ENCODE measurements at regions of chr4 and their contacts with region 1.

Region 1: DNA sequence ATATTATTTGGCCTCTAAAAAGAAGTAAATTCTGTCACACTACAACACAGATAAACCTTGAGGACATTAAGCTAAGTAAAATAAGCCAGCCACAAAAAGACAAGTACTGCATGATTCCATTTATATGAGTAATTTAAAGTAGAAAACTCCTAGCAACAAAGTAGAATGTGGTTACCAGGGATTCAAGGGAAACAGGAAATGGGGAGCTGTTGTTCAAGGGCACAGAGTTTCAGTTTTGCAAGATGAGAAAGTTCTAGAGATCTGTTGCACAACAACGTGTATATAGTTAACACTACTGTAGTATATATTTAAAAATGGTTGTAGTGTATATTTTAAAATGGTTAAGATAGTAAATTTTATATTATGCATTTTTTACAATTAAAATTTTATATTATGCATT is 25.4 kb downstream of the SEC31A start:
- DNase-seq: peak; percentile 24
- H3K4me3 Mint-ChIP-seq: no peak overlapping the region
- H3K27ac Mint-ChIP-seq: peak overlapping the region; percentile 91
- H3K4me1 Mint-ChIP-seq: peaks cover 48% of the 10 kb centered on the region
- H3K27me3 Mint-ChIP-seq: no peaks in the 10 kb centered on the region

Region 2: GRCh38 chr4:82825425-82825824 is 40.2 kb before region 1 on chr4:
- intact Hi-C with region 1: no loop called
- DNase-seq: no peak
- H3K4me3 Mint-ChIP-seq: no peak overlapping the region
- H3K27ac Mint-ChIP-seq: no peak overlapping the region
- H3K4me1 Mint-ChIP-seq: peaks cover 7% of the 10 kb centered on the region
- H3K27me3 Mint-ChIP-seq: no peaks in the 10 kb centered on the region

Region 3: DNA sequence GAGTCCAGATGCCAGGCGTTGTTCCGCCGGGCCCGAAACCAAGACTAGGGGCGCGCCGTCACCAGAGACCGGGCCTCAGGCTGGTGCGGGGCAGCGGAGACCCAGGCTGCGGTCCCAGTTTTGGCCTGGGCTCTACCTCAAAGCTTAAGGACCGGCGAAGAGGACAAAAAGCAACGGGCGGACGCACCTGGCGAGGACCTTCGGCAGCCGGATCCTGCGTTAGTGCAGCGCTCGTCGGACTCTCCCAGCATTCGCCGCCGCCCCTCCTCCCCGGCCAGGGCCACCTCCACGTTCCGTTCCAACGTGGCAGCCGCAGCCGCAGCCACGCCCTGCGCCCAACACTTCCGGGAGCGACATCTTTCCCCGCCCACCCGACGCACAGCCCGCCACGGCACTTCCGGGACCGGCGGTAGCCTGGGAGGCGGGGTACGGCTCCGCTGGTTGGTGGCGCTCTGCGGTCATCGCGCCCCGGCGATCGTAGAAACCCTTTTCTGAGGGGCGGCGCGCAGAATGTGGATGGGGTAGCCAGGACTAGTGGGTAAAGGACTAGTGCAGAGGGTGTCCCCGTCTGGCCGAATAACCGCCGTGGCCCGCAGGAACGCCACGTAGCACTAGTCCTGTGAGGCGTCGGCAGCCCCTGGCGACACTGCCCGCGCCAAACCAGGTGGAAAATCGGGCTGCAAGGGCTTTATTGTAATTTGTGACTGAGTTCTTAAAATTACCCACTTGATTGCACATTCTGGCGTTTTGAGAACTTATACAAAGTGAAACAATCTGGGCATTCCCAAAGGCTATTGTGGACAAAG is 25.5 kb after region 1 on chr4 and contains the start of gene SEC31A:
- intact Hi-C with region 1: loop called (anchors 1 kb)
- DNase-seq: peak; percentile 96
- H3K4me3 Mint-ChIP-seq: peak within 1 kb of the TSS; percentile 88
- H3K27ac Mint-ChIP-seq: peak within 1 kb of the TSS; percentile 86
- H3K4me1 Mint-ChIP-seq: peaks cover 51% of the 10 kb centered on the region
- H3K27me3 Mint-ChIP-seq: no peaks in the 10 kb centered on the region
- total RNA-seq, gene SEC31A: 118 and 123 TPM in 2 replicates

Measured in activated T-helper 1 cell treated with anti-CD3 and anti-CD28 coated beads, Interleukin-12 subunit alpha, Interleukin-12 subunit beta, Interleukin-2, Interleukin-4 antibody, amounts not matched to agents 30 ng/mL and 10 ng/mL and 1 ng/mL, durations not matched to agents 14 hours and 24 hours and 36 hours (primary cell).